Dendritic cell treated with granulocyte-macrophage colony-stimulating factor and Interleukin-4, amounts not matched to agents 40 ng/mL and 50 ng/mL, for 4 days (primary cell): ENCODE measurements at regions of chr12 and their contacts with region 1.

Region 1: DNA sequence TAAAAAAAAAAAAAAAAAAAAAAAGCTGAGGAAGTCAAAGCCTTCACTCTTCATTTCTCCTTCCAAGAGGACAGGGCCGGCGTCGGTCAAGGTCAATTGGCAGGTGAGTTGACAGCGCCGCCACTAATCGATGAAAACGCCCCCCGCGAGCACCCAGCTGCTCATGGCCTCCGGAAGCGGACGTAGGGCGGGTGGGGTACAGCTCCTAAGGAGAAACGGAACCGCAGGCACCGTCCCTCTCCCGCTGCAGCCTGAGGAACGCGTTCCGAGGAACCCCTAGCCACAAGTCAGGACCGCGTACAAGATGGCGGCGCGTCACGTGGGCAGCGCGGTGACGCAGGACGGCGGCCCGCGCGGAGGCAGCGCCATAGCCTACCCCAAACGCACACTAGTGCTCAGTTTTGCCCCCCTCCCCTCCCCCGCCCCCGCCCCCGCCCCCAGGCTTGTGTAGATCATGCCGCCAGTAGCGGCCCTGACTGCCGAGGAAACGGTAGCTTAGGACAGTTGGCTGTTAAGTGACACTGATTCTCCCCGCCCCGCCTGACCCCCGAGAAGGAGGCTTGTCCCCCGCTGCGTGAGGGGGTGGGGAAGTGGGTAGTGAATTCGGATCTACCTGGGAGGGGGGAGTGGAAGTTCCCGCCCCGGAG is at the start of gene ATF1:
- H3K4me3 Mint-ChIP-seq: peak within 1 kb of the TSS; percentile 95
- H3K27ac Mint-ChIP-seq: peak within 1 kb of the TSS; percentile 98
- H3K4me1 Mint-ChIP-seq: peaks cover 45% of the 10 kb centered on the region
- H3K27me3 Mint-ChIP-seq: no peaks in the 10 kb centered on the region

Region 2: DNA sequence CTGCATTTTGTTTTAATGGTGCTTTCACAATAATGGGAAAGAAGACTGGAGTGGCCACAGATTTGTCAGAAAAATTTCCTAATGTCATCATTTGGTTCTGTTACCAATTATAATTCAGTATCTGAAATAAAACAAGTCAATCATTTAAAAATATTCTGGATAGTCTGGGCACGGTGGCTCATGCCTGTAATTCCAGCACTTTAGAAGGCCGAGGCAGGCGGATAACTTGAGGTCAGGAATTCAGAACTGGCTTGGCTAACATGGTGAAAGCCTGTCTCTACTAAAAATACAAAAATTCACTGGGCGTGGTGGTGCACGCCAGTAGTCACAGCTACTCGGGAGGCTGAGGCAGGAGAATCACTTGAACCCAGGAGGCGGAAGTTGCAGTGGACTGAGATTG is 476.5 kb before region 1 on chr12:
- intact Hi-C with region 1: no loop called
- H3K4me3 Mint-ChIP-seq: no peak overlapping the region
- H3K27ac Mint-ChIP-seq: no peak overlapping the region
- H3K4me1 Mint-ChIP-seq: peaks cover 17% of the 10 kb centered on the region
- H3K27me3 Mint-ChIP-seq: peaks cover 6% of the 10 kb centered on the region

Region 3: DNA sequence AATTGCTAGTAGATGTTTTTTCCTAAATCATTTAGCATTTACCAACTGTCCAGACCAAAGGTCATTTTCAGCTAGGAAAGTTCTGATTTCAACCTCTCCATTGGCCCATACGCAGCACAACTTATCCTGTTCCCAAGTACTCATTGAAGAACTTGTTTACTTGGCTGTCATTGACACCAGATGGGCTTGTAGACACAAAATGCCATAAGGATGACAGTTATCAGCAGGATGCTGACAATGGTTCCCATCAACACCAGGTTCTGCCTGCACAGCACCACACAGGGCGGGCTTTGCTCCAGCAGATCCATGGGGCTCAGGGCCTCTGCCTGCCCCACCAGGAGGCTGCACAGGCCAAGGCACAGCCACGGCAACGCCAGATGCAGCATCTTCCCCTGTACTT is 42.4 kb after region 1 on chr12:
- intact Hi-C with region 1: loop called (anchors 5 kb)
- H3K4me3 Mint-ChIP-seq: no peak overlapping the region
- H3K27ac Mint-ChIP-seq: no peak overlapping the region
- H3K4me1 Mint-ChIP-seq: no peaks in the 10 kb centered on the region
- H3K27me3 Mint-ChIP-seq: no peaks in the 10 kb centered on the region

Region 4: GRCh38 chr12:50924439-50925341 is 160.9 kb after region 1 on chr12:
- intact Hi-C with region 1: loop called (anchors 5 kb)
- H3K4me3 Mint-ChIP-seq: peak overlapping the region; percentile 99
- H3K27ac Mint-ChIP-seq: peak overlapping the region; percentile 97
- H3K4me1 Mint-ChIP-seq: peaks cover 38% of the 10 kb centered on the region
- H3K27me3 Mint-ChIP-seq: no peaks in the 10 kb centered on the region

Region 5: DNA sequence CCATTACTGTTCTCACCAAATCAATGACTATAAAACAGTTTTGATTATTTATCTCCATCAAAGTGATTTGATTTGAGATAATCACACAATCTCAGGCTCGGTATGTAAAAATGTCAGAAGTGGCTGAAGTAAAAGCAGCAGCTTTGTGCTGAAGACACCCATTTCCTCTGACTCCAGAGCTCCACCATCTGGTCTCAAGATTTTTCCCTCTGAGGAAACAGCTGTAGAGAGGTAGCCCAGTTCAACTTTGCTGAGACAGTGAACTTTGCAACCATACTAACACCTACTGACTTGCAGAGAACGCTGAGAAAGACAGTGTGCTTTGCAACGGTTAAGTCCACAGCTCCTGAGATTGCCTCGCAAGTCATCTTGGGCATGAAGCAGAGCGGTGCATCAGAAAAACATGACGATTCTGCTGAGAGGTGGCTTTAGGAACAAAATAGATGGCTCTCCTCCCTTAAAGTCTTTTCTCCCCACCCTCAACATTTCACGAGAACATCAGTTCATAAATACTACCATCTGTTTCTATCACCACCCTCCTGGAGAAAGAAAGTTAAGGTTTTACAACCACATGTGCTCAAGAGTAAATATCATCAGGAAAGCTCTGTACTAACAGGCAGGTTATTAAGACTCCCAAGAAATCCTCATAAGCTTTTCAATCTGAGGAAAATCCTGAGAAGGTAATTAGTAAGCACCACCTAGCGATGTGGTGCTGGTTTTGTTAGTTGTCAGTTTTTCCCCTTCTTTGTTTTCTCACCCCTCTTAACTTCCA is 223.4 kb after region 1 on chr12:
- intact Hi-C with region 1: loop called (anchors 1 kb)
- H3K4me3 Mint-ChIP-seq: no peak overlapping the region
- H3K27ac Mint-ChIP-seq: no peak overlapping the region
- H3K4me1 Mint-ChIP-seq: peaks cover 25% of the 10 kb centered on the region
- H3K27me3 Mint-ChIP-seq: no peaks in the 10 kb centered on the region